ENCODE measurements at regions of chr22 and their contacts with region 1.

Region 1: GRCh38 chr22:21652010-21652546 is 10.0 kb downstream of the SDF2L1 start:
- DNase-seq: peak; percentile 71 to 88 (median 75)
- H3K4me3 ChIP-seq: peak overlapping the region; percentile 56 to 74
- H3K4me3 Mint-ChIP-seq: peak overlapping the region; percentile 81 to 95 (median 88)
- H3K27ac ChIP-seq: peak overlapping the region; percentile 42
- H3K27ac Mint-ChIP-seq: peak overlapping the region in 6 of 7 donors; percentile 13 to 87 (median 36)
- H3K4me1 ChIP-seq: peaks cover 31% of the 10 kb centered on the region
- H3K4me1 Mint-ChIP-seq: peaks cover 13 to 32% (median 22%) of the 10 kb centered on the region in 4 donors
- H3K27me3 ChIP-seq: no peaks in the 10 kb centered on the region
- H3K27me3 Mint-ChIP-seq: no peaks in the 10 kb centered on the region

Region 2: GRCh38 chr22:21447694-21448402 is 204.2 kb before region 1 on chr22:
- CTCF ChIA-PET with region 1: no interaction called
- POLR2A ChIA-PET with region 1: no interaction called
- intact Hi-C with region 1: no loop called
- DNase-seq: no peak
- H3K4me3 ChIP-seq: no peak overlapping the region
- H3K4me3 Mint-ChIP-seq: no peak overlapping the region
- H3K27ac ChIP-seq: no peak overlapping the region
- H3K27ac Mint-ChIP-seq: no peak overlapping the region
- H3K4me1 ChIP-seq: no peaks in the 10 kb centered on the region
- H3K4me1 Mint-ChIP-seq: peaks cover 0 to 2% (median 0%) of the 10 kb centered on the region in 4 donors
- H3K27me3 ChIP-seq: no peaks in the 10 kb centered on the region
- H3K27me3 Mint-ChIP-seq: no peaks in the 10 kb centered on the region

Region 3: GRCh38 chr22:21666786-21667185 is 14.7 kb after region 1 on chr22:
- CTCF ChIA-PET with region 1: interaction called, 5 read pairs
- POLR2A ChIA-PET with region 1: interaction called, 11 read pairs
- intact Hi-C with region 1: loop called (anchors 1 kb)
- DNase-seq: no peak
- H3K4me3 ChIP-seq: peak overlapping the region; percentile 43 to 97
- H3K4me3 Mint-ChIP-seq: peak overlapping the region; percentile 89 to 100 (median 97)
- H3K27ac ChIP-seq: peak overlapping the region; percentile 83
- H3K27ac Mint-ChIP-seq: peak overlapping the region; percentile 52 to 99 (median 76)
- H3K4me1 ChIP-seq: peaks cover 25% of the 10 kb centered on the region
- H3K4me1 Mint-ChIP-seq: peaks cover 19 to 45% (median 32%) of the 10 kb centered on the region in 4 donors
- H3K27me3 ChIP-seq: no peaks in the 10 kb centered on the region
- H3K27me3 Mint-ChIP-seq: no peaks in the 10 kb centered on the region

Region 4: GRCh38 chr22:21816787-21817496 is 164.9 kb after region 1 on chr22:
- CTCF ChIA-PET with region 1: no interaction called
- POLR2A ChIA-PET with region 1: no interaction called
- intact Hi-C with region 1: no loop called
- DNase-seq: peak; percentile 73 to 82 (median 75)
- H3K4me3 ChIP-seq: peak overlapping the region in 1 of 2 donors; percentile 16
- H3K4me3 Mint-ChIP-seq: peak overlapping the region; percentile 65 to 89 (median 80)
- H3K27ac ChIP-seq: peak overlapping the region; percentile 85
- H3K27ac Mint-ChIP-seq: peak overlapping the region; percentile 95 to 99 (median 97)
- H3K4me1 ChIP-seq: peaks cover 57% of the 10 kb centered on the region
- H3K4me1 Mint-ChIP-seq: peaks cover 51 to 78% (median 65%) of the 10 kb centered on the region in 4 donors
- H3K27me3 ChIP-seq: no peaks in the 10 kb centered on the region
- H3K27me3 Mint-ChIP-seq: no peaks in the 10 kb centered on the region

Measured in CD4-positive, alpha-beta memory T cell (primary cell).